ENCODE measurements at regions of chr17 and their contacts with region 1.

Region 1: DNA sequence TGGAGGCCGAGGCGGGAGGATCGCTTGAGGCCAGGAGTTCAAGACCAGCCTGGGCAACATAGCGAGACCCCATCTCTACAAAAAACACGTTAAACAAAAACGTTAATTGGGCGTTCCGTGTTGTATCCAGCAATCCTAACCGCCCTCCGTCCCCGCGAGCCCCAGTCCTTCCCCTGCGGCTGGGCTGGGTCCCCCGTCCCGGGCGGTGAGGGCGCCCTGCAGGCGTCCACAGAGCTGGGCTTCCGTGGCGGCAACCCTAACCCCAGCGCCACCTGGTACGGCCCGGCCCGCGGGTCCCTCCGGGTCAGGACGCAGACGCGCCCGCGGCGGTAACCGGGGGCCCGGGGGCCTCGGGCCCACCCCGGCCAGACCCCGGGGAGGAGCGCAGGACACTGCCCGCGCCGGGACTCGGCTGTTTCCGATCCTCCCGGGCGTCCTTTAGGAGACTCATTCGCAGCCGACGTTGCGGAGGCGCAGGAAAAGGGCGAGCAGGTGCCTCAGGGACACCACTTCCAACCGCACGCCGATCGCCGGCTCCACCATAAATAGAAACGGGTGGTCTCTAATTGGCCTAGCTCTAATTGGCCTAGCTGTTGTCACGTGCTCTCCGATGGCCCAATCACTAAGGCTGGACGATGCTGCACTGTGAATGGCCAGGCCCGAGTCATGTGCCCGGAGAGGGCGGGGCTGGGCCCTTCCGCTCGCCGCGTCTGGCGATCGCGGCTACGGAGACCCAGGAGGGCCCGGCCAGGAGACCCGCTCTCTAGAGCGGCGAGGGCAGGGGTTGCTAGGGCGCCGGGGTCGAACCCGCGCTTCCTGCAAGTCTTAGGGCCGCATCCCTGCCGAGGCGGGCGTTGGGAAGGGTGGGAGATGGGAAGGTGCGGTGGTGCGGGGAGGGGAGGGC is 19.0 kb upstream of the CSNK1D start:
- DNase-seq: peak; percentile 96
- ATAC-seq: peak; percentile 93
- H3K4me3 ChIP-seq: peak overlapping the region; percentile 50 to 86 (median 72)
- H3K4me3 Mint-ChIP-seq: peak overlapping the region; percentile 93
- H3K27ac ChIP-seq: peak overlapping the region; percentile 92 to 97
- H3K27ac Mint-ChIP-seq: peak overlapping the region; percentile 93
- H3K4me1 ChIP-seq: peaks cover 20 to 31% of the 10 kb centered on the region in 2 donors
- H3K4me1 Mint-ChIP-seq: peaks cover 42% of the 10 kb centered on the region
- H3K27me3 ChIP-seq: no peaks in the 10 kb centered on the region
- H3K27me3 Mint-ChIP-seq: no peaks in the 10 kb centered on the region
- CTCF ChIP-seq: no peak

Region 2: GRCh38 chr17:82273327-82274133 is 19.0 kb before region 1 on chr17 and contains the start of gene CSNK1D:
- CTCF ChIA-PET with region 1: interaction called, 3 read pairs
- POLR2A ChIA-PET with region 1: interaction called, 28 read pairs
- intact Hi-C with region 1: loop called (anchors 1 kb)
- DNase-seq: peak; percentile 97
- ATAC-seq: peak; percentile 77
- H3K4me3 ChIP-seq: peak within 1 kb of the TSS; percentile 70 to 87 (median 80)
- H3K4me3 Mint-ChIP-seq: peak within 1 kb of the TSS; percentile 93
- H3K27ac ChIP-seq: peak within 1 kb of the TSS; percentile 83 to 95
- H3K27ac Mint-ChIP-seq: peak within 1 kb of the TSS; percentile 99
- H3K4me1 ChIP-seq: peaks cover 30 to 48% of the 10 kb centered on the region in 2 donors
- H3K4me1 Mint-ChIP-seq: peaks cover 41% of the 10 kb centered on the region
- H3K27me3 ChIP-seq: peaks cover 0 to 5% (median 0%) of the 10 kb centered on the region in 4 experiments
- H3K27me3 Mint-ChIP-seq: no peaks in the 10 kb centered on the region
- CTCF ChIP-seq: no peak
- total RNA-seq, gene CSNK1D: 241 and 258 TPM in 2 replicates